Caco-2 (cell line): ENCODE measurements at regions of chr15 and their contacts with region 1.

Region 1: DNA sequence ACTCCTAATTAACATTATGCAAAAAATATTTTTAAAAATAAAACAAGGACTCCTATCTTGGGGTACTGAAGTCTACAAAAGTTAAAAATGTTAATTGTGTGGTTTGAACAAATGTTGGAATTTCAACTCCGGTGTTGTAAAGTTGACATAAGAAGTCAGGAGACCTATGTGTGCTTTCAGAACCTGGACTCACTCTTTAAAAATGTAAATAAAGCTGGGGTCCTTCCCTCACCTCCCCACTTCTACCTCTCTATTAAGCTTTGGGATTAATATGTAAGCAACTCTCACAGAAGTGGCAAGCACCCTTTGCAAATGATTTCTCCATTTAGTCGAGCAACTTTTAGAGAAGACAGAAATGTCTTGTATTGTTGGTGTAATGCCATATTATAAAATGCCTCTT is 11.9 kb downstream of the MEIS2 start:
- DNase-seq: no peak
- H3K4me3 ChIP-seq: no peak overlapping the region
- H3K4me3 Mint-ChIP-seq: no peak overlapping the region
- H3K27ac Mint-ChIP-seq: no peak overlapping the region
- H3K4me1 ChIP-seq: peaks cover 43% of the 10 kb centered on the region
- H3K4me1 Mint-ChIP-seq: peaks cover 26% of the 10 kb centered on the region
- H3K27me3 ChIP-seq: no peaks in the 10 kb centered on the region
- H3K27me3 Mint-ChIP-seq: no peaks in the 10 kb centered on the region
- CTCF ChIP-seq: no peak

Region 2: GRCh38 chr15:37100109-37100965 is 11.9 kb after region 1 on chr15 and contains the start of gene MEIS2:
- CTCF ChIA-PET with region 1: interaction called, 3 read pairs
- POLR2A ChIA-PET with region 1: interaction called, 4 read pairs
- intact Hi-C with region 1: loop called (anchors 1 kb)
- DNase-seq: peak; percentile 92 to 96
- H3K4me3 ChIP-seq: peak within 1 kb of the TSS; percentile 89
- H3K4me3 Mint-ChIP-seq: peak within 1 kb of the TSS; percentile 90
- H3K27ac Mint-ChIP-seq: peak within 1 kb of the TSS; percentile 91
- H3K4me1 ChIP-seq: peaks cover 5% of the 10 kb centered on the region; the same call in 1 of the 2 replicates
- H3K4me1 Mint-ChIP-seq: peaks cover 17% of the 10 kb centered on the region
- H3K27me3 ChIP-seq: no peaks in the 10 kb centered on the region
- H3K27me3 Mint-ChIP-seq: no peaks in the 10 kb centered on the region
- CTCF ChIP-seq: no peak
- total RNA-seq, gene MEIS2: 28.5 and 28.7 TPM in 2 replicates